GM10248 (cell line): ENCODE measurements at regions of chr1 and their contacts with region 1.

Region 1: DNA sequence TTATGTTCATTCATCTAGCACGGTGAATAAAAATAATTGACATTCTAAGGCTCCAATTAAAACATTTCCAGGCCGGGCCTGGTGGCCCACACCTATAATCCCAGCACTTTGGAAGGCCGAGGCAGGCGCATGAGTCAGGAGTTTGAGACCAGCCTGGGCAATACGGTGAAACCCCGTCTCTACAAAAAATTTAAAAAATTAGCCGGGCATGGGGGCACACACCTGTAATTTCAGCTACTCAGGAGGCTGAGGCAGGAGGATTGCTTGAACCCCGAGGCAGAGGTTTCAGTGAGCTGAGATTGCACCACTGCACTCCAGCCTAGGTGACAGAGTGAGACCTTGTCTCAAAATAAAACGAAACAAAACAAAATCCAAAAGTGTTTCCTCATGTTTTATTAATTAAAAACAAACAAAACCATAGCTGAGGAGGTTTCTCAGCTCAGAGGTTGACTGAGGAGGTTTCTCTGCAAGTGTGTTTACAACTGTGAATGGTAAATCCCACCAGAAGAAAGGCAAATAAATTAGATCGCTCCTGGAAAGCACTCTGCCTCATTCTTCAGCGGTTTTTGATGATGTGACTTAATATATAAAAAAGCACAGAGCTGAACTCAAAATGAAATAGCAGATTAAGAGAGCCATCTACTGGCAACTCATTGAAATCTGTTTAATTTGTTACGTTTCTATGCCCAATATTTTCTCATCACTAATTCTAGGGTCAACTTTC is 37.7 kb upstream of the ATG4C start:
- DNase-seq: peak; percentile 47
- CTCF ChIP-seq: peak; percentile 45

Region 2: GRCh38 chr1:62391369-62391971 is 354.8 kb before region 1 on chr1:
- CTCF ChIA-PET with region 1: interaction called, 13 read pairs
- POLR2A ChIA-PET with region 1: no interaction called
- DNase-seq: peak; percentile 30
- CTCF ChIP-seq: peak; percentile 38

Region 3: DNA sequence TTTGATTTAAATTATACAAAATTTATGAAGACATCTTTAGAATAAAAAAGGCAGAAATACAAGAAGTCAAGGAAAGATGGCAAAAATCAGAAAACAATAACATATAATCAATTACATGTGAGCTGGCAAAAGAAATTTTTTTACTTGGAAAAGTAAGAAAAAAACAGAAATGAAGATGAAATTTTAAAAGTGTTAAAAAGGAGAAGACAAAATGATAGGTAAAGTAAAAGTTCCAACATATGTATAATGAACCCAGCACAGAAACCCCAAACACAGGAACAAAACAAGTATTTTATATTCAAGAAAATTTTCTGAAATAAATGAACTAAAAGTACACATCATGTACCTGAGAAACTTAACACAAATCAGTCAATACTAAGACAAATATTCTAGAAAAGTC is 246.0 kb before region 1 on chr1:
- CTCF ChIA-PET with region 1: interaction called, 107 read pairs
- POLR2A ChIA-PET with region 1: no interaction called
- DNase-seq: no peak
- CTCF ChIP-seq: no peak

Region 4: GRCh38 chr1:62530516-62531154 is 215.6 kb before region 1 on chr1:
- CTCF ChIA-PET with region 1: interaction called, 31 read pairs
- POLR2A ChIA-PET with region 1: no interaction called
- DNase-seq: no peak
- CTCF ChIP-seq: peak; percentile 14

Region 5: DNA sequence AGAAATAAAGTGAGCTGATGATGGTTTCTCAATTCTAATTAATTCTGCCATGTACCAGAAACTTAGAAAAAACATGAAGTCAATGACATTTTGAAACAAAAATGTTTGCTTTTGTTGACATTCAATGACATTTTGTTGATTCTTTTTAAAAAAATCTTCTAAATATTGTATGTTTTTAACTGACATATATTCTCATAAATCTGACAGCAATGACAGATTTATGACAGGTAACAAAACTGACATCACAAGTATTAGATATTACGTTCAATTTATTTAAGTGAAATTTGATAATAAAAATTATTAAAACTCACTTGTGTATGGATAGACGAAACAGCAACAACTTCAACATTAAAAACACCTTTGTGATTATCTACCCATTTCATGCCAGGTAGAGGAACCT is 184.9 kb before region 1 on chr1:
- CTCF ChIA-PET with region 1: no interaction called
- POLR2A ChIA-PET with region 1: no interaction called
- DNase-seq: no peak
- CTCF ChIP-seq: no peak

Region 6: DNA sequence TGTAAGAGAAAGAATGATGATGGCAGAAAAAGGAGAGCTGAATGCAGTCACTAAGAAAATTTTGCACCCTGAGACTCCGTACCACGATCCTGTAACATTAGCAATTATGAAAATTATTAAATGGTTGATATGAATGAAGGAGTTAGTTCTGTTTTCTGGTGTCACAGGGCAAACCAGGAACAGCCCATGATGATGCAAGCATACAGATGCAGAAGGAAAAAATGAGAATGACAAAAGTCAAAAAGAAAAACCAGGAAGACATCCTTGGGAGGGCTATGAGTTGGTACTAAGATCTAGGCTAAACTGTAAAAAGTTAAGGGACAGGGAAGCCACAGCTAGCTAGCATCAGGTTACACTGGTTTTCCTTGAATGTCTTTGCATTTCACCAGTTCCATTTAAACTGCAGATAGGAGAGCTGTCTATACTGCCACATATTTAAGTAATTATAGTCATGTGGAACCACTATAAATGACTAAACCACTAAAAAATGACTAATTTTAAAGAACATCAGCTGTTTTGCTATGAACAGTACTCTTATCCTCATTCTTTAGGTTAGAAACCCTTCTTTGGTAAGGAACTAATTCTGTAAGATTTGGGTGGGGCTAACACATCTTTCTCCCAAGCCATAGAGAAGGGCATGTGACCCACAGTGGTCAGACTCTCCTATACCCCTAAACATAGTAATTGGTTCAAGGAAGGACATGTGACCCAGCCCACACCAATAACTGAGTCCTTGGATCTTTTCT is 69.5 kb before region 1 on chr1:
- CTCF ChIA-PET with region 1: no interaction called
- POLR2A ChIA-PET with region 1: no interaction called
- DNase-seq: no peak
- CTCF ChIP-seq: no peak

Region 7: DNA sequence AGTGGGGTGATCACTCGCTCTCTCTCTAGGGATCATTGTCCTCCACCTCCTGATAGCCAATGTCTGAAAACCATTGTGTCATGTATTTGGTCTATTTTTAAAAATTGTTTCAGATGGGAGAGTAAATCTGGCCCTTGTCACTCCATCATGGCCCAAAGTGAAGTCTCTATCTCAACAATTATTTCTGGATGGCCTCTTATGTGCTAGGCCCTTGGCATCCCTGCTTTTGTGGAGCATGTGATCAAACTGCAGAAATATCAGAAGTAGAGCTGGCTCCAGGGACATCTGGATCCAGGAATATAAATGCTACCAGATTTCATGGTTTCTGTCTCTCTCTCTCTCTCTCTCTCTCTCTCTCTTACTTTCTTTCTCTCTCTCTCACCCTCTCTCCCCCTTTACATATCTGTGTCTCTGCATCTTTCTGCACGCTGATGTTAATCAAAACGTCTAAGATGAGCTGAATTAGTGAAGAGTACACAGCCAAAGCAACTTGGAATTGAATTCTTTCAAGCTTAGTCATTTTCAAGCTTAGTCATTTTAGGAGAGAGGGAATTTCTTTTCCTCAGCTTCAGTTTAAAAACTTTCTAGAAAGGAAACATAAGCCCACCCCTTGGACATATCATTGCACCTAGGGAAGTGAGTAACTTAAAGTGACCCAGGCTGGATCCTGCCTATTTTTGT is 10.6 kb before region 1 on chr1:
- CTCF ChIA-PET with region 1: interaction called, 18 read pairs
- POLR2A ChIA-PET with region 1: no interaction called
- DNase-seq: no peak
- CTCF ChIP-seq: no peak